Sigmoid colon (tissue), 7 donors: ENCODE measurements at regions of chr15 and their contacts with region 1.

Region 1: DNA sequence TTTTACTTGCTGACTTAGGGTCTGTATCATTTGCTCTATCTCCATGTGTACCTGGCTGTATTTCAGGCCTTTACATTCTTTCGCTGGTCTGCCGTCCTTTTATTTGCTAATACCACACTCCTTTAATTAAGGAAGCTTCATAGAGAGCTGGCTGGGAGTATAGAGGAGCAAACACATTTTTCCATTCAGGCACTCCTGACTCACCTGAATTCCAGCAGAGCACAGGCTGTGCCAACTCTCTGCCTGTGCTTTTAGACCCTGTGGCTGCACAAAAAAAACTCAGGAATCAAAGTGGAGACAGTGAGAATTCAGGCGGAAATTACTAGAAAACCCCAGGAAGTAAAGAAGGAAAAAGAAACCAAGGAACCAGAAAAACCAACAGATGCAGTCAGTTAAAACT is 29.0 kb upstream of the ATP10A start:
- DNase-seq: no peak
- H3K4me3 ChIP-seq: no peak overlapping the region
- H3K27ac ChIP-seq: peak overlapping the region in 3 of 4 donors; percentile 71 to 77 (median 75)
- H3K4me1 ChIP-seq: peaks cover 0 to 29% (median 27%) of the 10 kb centered on the region in 4 donors
- H3K27me3 ChIP-seq: no peaks in the 10 kb centered on the region
- CTCF ChIP-seq: no peak
- EP300 ChIP-seq: no peak
- POLR2A ChIP-seq: no peak

Region 2: DNA sequence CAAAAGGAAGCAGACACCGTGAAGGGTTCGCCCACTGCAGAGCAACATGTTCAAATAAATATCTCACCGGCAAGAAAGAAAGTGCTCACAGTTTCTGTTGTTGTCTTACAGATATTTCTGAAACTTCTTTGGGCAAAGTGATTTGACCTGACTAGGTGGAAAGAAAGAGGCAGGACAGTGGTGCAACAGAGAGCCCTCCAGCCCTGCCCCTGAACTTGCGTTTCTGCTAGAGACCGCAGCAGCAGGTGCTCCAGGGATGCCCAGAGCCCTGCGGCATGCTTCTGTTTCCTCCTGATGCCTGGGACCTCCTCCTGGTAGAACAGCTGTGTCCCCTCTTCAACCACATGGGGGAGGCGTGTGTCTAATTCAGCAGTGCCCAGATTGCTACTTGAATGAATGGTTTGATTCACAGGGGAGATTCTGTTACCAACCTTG is 152.4 kb before region 1 on chr15:
- intact Hi-C with region 1: no loop called
- DNase-seq: no peak
- H3K4me3 ChIP-seq: no peak overlapping the region
- H3K27ac ChIP-seq: peak overlapping the region in 2 of 4 donors; percentile 23 to 88
- H3K4me1 ChIP-seq: peaks cover 0 to 35% (median 30%) of the 10 kb centered on the region in 4 donors
- H3K27me3 ChIP-seq: no peaks in the 10 kb centered on the region
- CTCF ChIP-seq: peak in 2 of 4 experiments; percentile 31 to 33
- EP300 ChIP-seq: no peak
- POLR2A ChIP-seq: no peak

Region 3: DNA sequence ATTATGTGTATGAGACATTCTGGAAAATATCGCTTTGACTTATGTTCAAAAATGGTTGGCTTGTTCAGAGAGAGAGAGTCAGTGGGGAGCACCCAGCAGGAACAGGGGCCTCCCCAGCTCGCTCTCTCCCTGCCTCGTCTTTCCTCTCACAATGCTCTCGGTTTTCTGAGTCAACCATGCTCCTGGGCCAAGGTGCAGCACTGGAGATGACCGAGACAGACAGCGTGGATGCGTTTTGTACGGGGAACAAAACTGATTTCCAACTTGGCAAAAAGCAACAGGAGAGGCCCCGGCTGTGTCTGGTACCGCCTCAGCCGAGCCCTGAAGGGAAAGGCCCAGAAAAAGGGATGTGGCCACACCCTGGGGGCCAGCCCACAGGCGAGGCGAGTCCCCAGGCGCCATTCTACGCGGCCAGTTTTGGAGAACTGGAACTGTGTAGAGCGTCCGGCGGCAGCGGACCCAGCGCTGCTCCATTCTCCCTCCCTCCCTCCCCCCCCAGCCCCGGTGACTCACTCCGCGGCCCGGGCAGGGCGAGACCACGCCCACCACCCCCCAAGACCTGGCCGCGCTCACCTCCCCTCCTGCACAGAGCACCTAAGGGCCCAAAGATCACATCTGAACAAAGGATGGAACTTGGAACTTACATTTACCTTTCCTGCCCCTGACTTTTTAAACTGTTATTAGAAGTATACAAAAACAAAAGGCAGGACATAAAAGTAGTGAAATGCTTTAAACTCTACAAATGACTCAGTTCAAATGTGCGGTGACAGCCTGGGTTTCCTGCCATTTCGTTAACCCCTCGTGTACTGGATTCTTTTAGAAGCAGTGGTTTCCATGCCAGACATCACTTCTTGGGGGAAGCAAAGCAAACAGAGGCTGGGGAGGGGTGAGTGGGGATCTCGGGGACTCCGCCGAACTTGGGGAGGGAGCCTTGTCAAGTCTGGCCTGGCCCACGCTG is 41.7 kb before region 1 on chr15:
- intact Hi-C with region 1: loop called (anchors 5 kb)
- DNase-seq: peak; percentile 91
- H3K4me3 ChIP-seq: peak overlapping the region; percentile 34 to 48 (median 46)
- H3K27ac ChIP-seq: peak overlapping the region; percentile 83 to 92 (median 88)
- H3K4me1 ChIP-seq: peaks cover 0 to 50% (median 32%) of the 10 kb centered on the region in 4 donors
- H3K27me3 ChIP-seq: no peaks in the 10 kb centered on the region
- CTCF ChIP-seq: no peak
- EP300 ChIP-seq: no peak
- POLR2A ChIP-seq: peak in 1 of 2 donors; percentile 40